CD14-positive monocyte (primary cell): ENCODE measurements at regions of chr3 and their contacts with region 1.

Region 1: GRCh38 chr3:73100741-73101559 is 39.5 kb downstream of the EBLN2 start:
- DNase-seq: peak; percentile 50 to 72 (median 67)
- H3K4me3 ChIP-seq: no peak overlapping the region
- H3K4me3 Mint-ChIP-seq: no peak overlapping the region
- H3K27ac ChIP-seq: no peak overlapping the region
- H3K27ac Mint-ChIP-seq: peak overlapping the region in 1 of 7 donors; percentile 30
- H3K4me1 ChIP-seq: no peaks in the 10 kb centered on the region
- H3K4me1 Mint-ChIP-seq: peaks cover 5% of the 10 kb centered on the region
- H3K27me3 ChIP-seq: no peaks in the 10 kb centered on the region
- H3K27me3 Mint-ChIP-seq: peaks cover 0 to 6% (median 0%) of the 10 kb centered on the region in 3 donors
- CTCF ChIP-seq: peak; percentile 97

Region 2: DNA sequence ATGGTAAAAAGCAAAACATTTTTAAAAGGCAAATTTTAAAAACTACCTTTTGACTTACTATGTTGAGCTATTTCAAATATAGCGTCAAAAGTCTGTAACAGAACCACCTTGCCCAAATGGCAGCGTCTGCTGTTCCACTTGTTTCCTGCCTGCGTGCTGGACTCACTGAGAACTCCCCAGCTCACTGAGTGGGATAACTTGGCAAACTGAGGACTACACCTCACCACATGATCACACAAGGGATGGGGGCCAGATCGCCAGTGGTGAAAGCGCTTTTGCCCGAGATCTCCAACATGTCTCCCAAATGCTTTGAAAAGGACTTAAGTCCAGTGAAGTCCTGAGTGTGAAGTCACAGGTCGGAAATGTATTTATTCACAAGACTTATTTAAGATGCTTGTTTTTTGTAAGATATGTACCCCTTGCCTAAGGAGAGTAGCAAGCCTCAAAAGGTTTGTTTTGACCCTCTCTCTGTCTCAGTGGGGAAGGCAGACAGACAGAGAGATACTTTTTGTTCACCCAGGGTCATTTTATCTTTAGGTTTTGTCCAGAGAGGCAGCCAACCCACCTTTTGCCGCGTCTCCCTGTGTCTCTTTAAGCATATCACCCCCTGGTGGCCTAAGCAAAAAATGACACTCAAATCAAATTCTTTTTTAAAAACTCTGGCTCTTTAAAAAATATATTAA is 331.2 kb after region 1 on chr3:
- intact Hi-C with region 1: loop called (anchors 5 kb)
- DNase-seq: peak in 2 of 3 donors; percentile 7 to 9
- H3K4me3 ChIP-seq: no peak overlapping the region
- H3K4me3 Mint-ChIP-seq: no peak overlapping the region
- H3K27ac ChIP-seq: no peak overlapping the region
- H3K27ac Mint-ChIP-seq: no peak overlapping the region
- H3K4me1 ChIP-seq: no peaks in the 10 kb centered on the region
- H3K4me1 Mint-ChIP-seq: no peaks in the 10 kb centered on the region
- H3K27me3 ChIP-seq: no peaks in the 10 kb centered on the region
- H3K27me3 Mint-ChIP-seq: peaks cover 2 to 13% (median 3%) of the 10 kb centered on the region in 3 donors
- CTCF ChIP-seq: peak; percentile 78

Region 3: DNA sequence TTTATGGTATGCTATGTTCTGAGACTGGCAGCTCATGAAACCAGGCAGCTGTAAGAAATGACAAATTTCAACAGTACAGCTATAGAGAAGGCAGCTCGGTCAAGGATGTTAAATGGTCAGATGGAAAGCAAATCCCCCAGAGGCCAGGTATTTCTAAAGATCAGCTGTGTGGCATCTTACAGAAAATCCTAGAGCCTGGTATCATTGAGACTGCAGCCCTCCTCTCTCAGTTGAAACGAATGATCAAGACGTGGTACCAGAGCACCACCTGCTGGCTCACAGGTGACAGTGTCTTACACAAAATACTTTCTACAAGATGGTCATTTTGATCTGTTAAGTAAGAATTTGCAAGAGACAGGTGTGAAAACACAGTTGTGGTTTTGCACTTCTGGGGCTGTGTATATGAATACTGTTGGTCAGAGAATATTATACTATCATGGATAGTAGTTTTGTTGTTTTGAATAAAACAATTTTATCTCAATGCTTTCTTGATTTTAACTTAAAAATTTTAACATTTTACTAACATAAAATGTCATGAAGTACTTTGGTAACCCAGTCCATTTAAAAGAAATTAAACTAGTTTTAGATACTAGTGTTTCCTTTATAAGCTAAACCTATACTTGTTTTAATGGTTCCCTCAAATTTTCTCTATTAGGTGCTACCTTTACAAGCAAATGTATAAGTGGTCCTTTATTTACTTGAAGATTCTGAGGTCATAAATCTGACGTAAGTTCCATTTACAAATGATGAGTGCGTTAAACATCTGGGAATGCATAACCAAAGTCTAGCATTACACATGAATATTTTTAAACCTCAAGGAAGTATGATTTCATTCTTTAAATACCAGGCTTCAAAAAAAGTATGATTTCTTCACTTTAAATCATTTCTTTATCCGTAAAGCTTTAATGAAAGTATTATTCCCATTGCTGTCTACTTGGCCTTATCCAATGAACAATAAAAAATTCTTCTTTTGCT is 401.9 kb after region 1 on chr3:
- intact Hi-C with region 1: loop called (anchors 5 kb)
- DNase-seq: peak; percentile 9 to 20 (median 11)
- H3K4me3 ChIP-seq: no peak overlapping the region
- H3K4me3 Mint-ChIP-seq: no peak overlapping the region
- H3K27ac ChIP-seq: no peak overlapping the region
- H3K27ac Mint-ChIP-seq: no peak overlapping the region
- H3K4me1 ChIP-seq: no peaks in the 10 kb centered on the region
- H3K4me1 Mint-ChIP-seq: no peaks in the 10 kb centered on the region
- H3K27me3 ChIP-seq: no peaks in the 10 kb centered on the region
- H3K27me3 Mint-ChIP-seq: peaks cover 0 to 9% (median 8%) of the 10 kb centered on the region in 3 donors
- CTCF ChIP-seq: peak; percentile 68